Breast epithelium (tissue), 4 donors: ENCODE measurements at regions of chr7 and their contacts with region 1.

Region 1: GRCh38 chr7:94059746-94060145 is 55.6 kb upstream of the BET1 start:
- DNase-seq: no peak
- H3K4me3 ChIP-seq: no peak overlapping the region
- H3K27ac ChIP-seq: no peak overlapping the region
- H3K4me1 ChIP-seq: no peaks in the 10 kb centered on the region
- H3K27me3 ChIP-seq: peaks cover 0 to 4% of the 10 kb centered on the region in 2 donors
- CTCF ChIP-seq: no peak
- POLR2A ChIP-seq: no peak

Region 2: GRCh38 chr7:95141755-95142154 is 1082.0 kb after region 1 on chr7:
- intact Hi-C with region 1: loop called (anchors 5 kb)
- DNase-seq: no peak
- H3K4me3 ChIP-seq: no peak overlapping the region
- H3K27ac ChIP-seq: no peak overlapping the region
- H3K4me1 ChIP-seq: no peaks in the 10 kb centered on the region
- H3K27me3 ChIP-seq: no peaks in the 10 kb centered on the region
- CTCF ChIP-seq: no peak
- POLR2A ChIP-seq: no peak